ENCODE measurements at regions of chr3 and their contacts with region 1.

Region 1: GRCh38 chr3:17655743-17656142 is 86.7 kb downstream of the TBC1D5 start:
- DNase-seq: no peak
- H3K4me3 Mint-ChIP-seq: no peak overlapping the region
- H3K27ac Mint-ChIP-seq: no peak overlapping the region
- H3K4me1 Mint-ChIP-seq: no peaks in the 10 kb centered on the region
- H3K27me3 Mint-ChIP-seq: no peaks in the 10 kb centered on the region

Region 2: GRCh38 chr3:17645072-17645698 is 10.6 kb before region 1 on chr3:
- CTCF ChIA-PET with region 1: interaction called, 10 read pairs
- POLR2A ChIA-PET with region 1: no interaction called
- DNase-seq: no peak
- H3K4me3 Mint-ChIP-seq: no peak overlapping the region
- H3K27ac Mint-ChIP-seq: no peak overlapping the region
- H3K4me1 Mint-ChIP-seq: no peaks in the 10 kb centered on the region
- H3K27me3 Mint-ChIP-seq: no peaks in the 10 kb centered on the region

Measured in activated CD4-positive, alpha-beta memory T cell treated with anti-CD3 and anti-CD28 coated beads, Interleukin-2, amount 10 ng/mL, durations not matched to agents 7 days and 5 days (primary cell).